HepG2 (cell line): ENCODE measurements at regions of chr2 and their contacts with region 1.

Region 1: DNA sequence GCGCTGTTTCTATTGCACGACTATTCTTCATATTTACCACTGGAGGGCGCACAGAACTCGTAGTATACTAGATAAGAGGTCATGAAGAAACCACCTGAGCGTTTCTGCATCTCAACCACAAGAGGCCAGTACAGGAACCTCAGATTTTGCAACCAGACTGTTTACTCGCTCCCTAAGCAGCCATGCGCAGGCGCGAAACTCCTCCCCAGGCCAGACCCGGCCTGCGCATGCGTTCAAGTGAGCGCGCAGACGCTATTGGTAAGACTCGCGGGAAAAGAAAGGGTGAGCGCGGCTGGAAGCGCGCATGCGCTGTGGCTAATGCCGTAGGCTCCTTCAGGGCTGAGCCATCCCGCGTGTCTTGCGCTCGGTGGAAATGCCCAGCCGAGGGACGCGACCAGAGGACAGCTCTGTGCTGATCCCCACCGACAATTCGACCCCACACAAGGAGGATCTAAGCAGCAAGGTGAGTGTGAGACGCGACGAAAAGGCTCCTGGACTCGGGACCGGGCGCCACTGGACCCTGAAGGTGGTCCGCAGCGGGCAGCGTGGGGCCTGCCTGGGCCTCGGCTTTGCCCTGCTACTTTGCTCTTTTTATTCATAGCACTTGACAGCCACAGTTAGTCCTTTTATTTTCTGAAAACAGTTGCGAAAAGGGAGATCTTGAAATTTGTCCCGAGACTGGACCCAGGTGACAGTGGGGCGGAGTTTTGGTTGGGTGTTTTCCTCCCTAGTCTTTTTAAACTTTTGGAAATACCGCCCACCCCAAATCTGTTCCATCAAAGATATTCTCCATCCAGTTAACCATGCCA is at the start of gene ASNSD1:
- DNase-seq: peak; percentile 100
- ATAC-seq: peak; percentile 95
- H3K4me3 ChIP-seq: peak within 1 kb of the TSS; percentile 67 to 99 (median 93)
- H3K27ac ChIP-seq: peak within 1 kb of the TSS; percentile 73
- H3K4me1 ChIP-seq: peaks cover 48% of the 10 kb centered on the region
- H3K27me3 ChIP-seq: no peaks in the 10 kb centered on the region; a peak in 1 of 5 replicates
- CTCF ChIP-seq: peak; percentile 98
- EP300 ChIP-seq: no peak
- POLR2A ChIP-seq: peak; percentile 99
- RAD21 ChIP-seq: peak; percentile 95
- total RNA-seq, gene ASNSD1: 96.6 and 166 TPM in 2 replicates

Region 2: DNA sequence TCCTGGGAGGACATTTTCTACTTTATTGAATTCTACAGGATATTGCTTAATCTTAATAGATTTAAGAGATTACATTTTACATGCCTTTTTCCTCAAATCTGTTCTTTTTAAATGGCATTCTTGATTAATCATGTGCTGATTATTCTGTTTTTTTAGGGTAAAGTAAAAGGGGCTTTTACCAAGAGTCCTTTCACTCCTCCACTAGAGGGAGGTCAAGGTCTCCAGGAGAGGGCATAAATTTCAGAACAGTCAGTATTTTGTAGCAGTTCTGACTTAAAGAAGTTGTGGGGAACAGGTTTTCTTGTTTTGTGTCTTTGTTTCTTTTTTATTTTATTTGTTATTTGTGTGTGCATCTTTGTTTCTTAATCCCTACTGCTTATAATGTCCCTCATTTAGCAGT is 194.7 kb before region 1 on chr2:
- CTCF ChIA-PET with region 1: interaction called, 13 read pairs
- POLR2A ChIA-PET with region 1: no interaction called
- in situ Hi-C with region 1: no loop called
- intact Hi-C with region 1: no loop called
- DNase-seq: peak; percentile 55
- ATAC-seq: peak; percentile 78
- H3K4me3 ChIP-seq: no peak overlapping the region
- H3K27ac ChIP-seq: no peak overlapping the region
- H3K4me1 ChIP-seq: 0 out of 2 replicates have a peak, but pooled peaks cover 10% of the 10 kb centered on the region
- H3K27me3 ChIP-seq: no peaks in the 10 kb centered on the region
- CTCF ChIP-seq: peak; percentile 61
- EP300 ChIP-seq: no peak
- POLR2A ChIP-seq: no peak
- RAD21 ChIP-seq: peak; percentile 74

Region 3: DNA sequence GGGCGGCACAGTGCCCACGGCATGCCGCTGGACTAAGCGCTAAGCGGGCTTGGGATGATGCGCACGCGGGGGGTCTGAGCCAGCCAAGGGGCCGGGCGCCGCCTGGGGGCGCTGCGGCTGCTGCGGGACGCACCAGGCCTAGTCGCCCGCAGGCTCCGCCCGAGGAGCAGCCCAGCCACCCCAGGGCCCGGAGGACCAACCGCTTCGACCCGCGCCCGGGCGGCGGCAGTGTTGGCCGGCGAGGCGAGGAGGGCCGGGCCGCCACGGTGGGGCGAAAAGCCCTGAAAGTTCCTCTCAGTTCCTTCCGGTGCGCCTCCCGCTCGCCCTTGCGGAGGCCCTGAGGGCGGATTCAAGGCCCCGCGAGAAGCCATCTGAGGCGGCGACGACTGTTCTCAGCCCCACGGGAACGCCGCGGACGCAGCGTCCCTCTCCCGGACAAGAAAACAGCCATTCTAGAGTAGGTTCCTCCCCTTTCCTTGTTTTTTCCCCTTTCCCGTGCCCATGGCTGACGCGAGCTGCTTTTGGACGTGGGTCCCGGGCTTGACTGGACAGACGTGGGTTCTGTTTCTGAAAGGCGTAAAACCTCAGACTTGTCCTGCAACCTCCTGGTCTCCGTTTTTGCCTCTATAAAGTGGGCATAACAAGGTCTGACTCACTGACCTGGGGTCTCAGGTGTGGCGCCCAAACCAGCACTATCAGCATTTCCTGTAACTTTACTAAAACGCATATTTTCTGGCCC is 13.2 kb after region 1 on chr2 and contains the start of gene ANKAR:
- CTCF ChIA-PET with region 1: interaction called, 13 read pairs
- POLR2A ChIA-PET with region 1: interaction called, 25 read pairs
- in situ Hi-C with region 1: no loop called
- intact Hi-C with region 1: loop called (anchors 1 kb)
- DNase-seq: peak; percentile 88
- ATAC-seq: peak; percentile 99
- H3K4me3 ChIP-seq: peak within 1 kb of the TSS; percentile 85 to 93 (median 85)
- H3K27ac ChIP-seq: peak within 1 kb of the TSS; percentile 90
- H3K4me1 ChIP-seq: peaks cover 21% of the 10 kb centered on the region
- H3K27me3 ChIP-seq: no peaks in the 10 kb centered on the region; a peak in 1 of 5 replicates
- CTCF ChIP-seq: peak; percentile 94
- EP300 ChIP-seq: peak in 1 of 2 experiments; percentile 51; a peak in 1 of 4 replicates
- POLR2A ChIP-seq: peak; percentile 80 to 90
- RAD21 ChIP-seq: peak; percentile 97
- total RNA-seq, gene ANKAR: 3.0 and 3.6 TPM in 2 replicates

Region 4: GRCh38 chr2:189698020-189698887 is 36.9 kb after region 1 on chr2:
- CTCF ChIA-PET with region 1: interaction called, 64 read pairs
- POLR2A ChIA-PET with region 1: no interaction called
- in situ Hi-C with region 1: no loop called
- intact Hi-C with region 1: loop called (anchors 1 kb)
- DNase-seq: peak; percentile 67
- ATAC-seq: peak; percentile 61; the same call in 2 of the 3 replicates
- H3K4me3 ChIP-seq: no peak overlapping the region
- H3K27ac ChIP-seq: no peak overlapping the region
- H3K4me1 ChIP-seq: no peaks in the 10 kb centered on the region
- H3K27me3 ChIP-seq: no peaks in the 10 kb centered on the region
- CTCF ChIP-seq: peak; percentile 41; the same call in 1 of the 2 replicates
- EP300 ChIP-seq: no peak
- POLR2A ChIP-seq: no peak
- RAD21 ChIP-seq: no peak

Region 5: GRCh38 chr2:189751080-189751658 is 89.8 kb after region 1 on chr2:
- CTCF ChIA-PET with region 1: no interaction called
- POLR2A ChIA-PET with region 1: no interaction called
- in situ Hi-C with region 1: no loop called
- intact Hi-C with region 1: loop called (anchors 1 kb)
- DNase-seq: peak; percentile 54
- ATAC-seq: peak; percentile 98
- H3K4me3 ChIP-seq: no peak overlapping the region
- H3K27ac ChIP-seq: no peak overlapping the region
- H3K4me1 ChIP-seq: no peaks in the 10 kb centered on the region
- H3K27me3 ChIP-seq: no peaks in the 10 kb centered on the region
- CTCF ChIP-seq: peak; percentile 84
- EP300 ChIP-seq: 0 out of 4 replicates have a peak, but pooled peaks of 1 of the 2 experiments have one; percentile 8
- POLR2A ChIP-seq: no peak
- RAD21 ChIP-seq: 0 out of 2 replicates have a peak, but pooled peaks have one; percentile 14

Region 6: GRCh38 chr2:189783927-189784867 is 122.8 kb after region 1 on chr2 and contains the starts of genes ORMDL1 and PMS1:
- CTCF ChIA-PET with region 1: interaction called, 5 read pairs
- POLR2A ChIA-PET with region 1: interaction called, 10 read pairs
- in situ Hi-C with region 1: no loop called
- intact Hi-C with region 1: loop called (anchors 1 kb)
- DNase-seq: peak; percentile 93
- ATAC-seq: peak; percentile 97
- H3K4me3 ChIP-seq: peak within 1 kb of the TSS; percentile 79 to 83 (median 81)
- H3K27ac ChIP-seq: peak within 1 kb of the TSS; percentile 94
- H3K4me1 ChIP-seq: peaks cover 36% of the 10 kb centered on the region
- H3K27me3 ChIP-seq: no peaks in the 10 kb centered on the region; a peak in 1 of 5 replicates
- CTCF ChIP-seq: no peak; the same call in 1 of the 2 replicates
- EP300 ChIP-seq: no peak
- POLR2A ChIP-seq: peak; percentile 95 to 98
- RAD21 ChIP-seq: peak; percentile 39; the same call in 1 of the 2 replicates
- total RNA-seq, gene ORMDL1: 29.5 and 67.5 TPM in 2 replicates
- total RNA-seq, gene PMS1: 39.0 and 39.9 TPM in 2 replicates

Region 7: DNA sequence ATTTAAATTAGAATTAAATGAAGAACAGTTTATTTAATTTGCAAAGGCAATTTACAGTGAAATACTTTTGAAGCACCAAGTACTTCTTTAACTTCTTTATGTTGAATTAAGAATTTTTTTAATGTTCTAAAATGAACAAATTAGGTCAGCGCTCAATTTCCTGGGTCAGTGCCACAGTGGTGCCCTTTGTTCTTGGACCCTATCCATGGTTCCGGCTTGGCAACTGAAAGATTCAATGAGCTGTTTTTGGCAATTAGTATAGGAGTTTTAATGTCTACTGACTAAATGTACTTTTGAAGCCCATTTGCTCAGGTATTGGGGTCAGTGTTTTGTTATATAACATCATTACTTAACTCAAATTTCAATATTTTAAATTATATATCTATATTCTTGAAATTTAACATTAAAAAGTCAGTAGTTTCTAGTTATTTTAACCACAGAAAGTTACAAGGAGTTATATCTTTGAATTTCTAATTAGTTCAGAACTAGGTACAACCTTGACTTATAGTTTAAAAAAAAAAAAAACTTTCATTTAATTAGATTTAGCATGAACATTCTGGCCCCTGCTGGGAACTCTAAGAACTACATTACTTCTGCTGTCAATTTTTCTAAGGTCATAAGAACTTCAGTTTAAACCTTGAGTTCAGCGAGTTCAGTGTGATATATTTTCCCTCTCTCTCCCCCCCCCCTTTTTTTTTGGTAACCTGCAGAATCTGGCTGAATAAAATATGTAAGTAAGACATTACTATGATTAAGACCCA is 408.8 kb after region 1 on chr2:
- CTCF ChIA-PET with region 1: interaction called, 15 read pairs
- POLR2A ChIA-PET with region 1: no interaction called
- in situ Hi-C with region 1: loop called (anchors 25 kb)
- intact Hi-C with region 1: loop called (anchors 2 kb)
- DNase-seq: peak; percentile 68
- ATAC-seq: peak; percentile 44
- H3K4me3 ChIP-seq: no peak overlapping the region
- H3K27ac ChIP-seq: no peak overlapping the region
- H3K4me1 ChIP-seq: no peaks in the 10 kb centered on the region
- H3K27me3 ChIP-seq: no peaks in the 10 kb centered on the region
- CTCF ChIP-seq: peak; percentile 58
- EP300 ChIP-seq: no peak
- POLR2A ChIP-seq: no peak
- RAD21 ChIP-seq: no peak